CD4-positive, alpha-beta T cell (primary cell): ENCODE measurements at regions of chr15 and their contacts with region 1.

Region 1: GRCh38 chr15:60573936-60574335 is 95.0 kb upstream of the ICE2 start:
- DNase-seq: peak in 8 of 14 experiments; percentile 25 to 88 (median 60)
- ATAC-seq: peak; percentile 83
- H3K4me3 ChIP-seq: peak overlapping the region; percentile 24
- H3K4me3 Mint-ChIP-seq: peak overlapping the region; percentile 80
- H3K27ac ChIP-seq: peak overlapping the region; percentile 58 to 59
- H3K27ac Mint-ChIP-seq: peak overlapping the region; percentile 84
- H3K4me1 ChIP-seq: peaks cover 83% of the 10 kb centered on the region
- H3K4me1 Mint-ChIP-seq: peaks cover 92% of the 10 kb centered on the region
- H3K27me3 ChIP-seq: no peaks in the 10 kb centered on the region
- H3K27me3 Mint-ChIP-seq: no peaks in the 10 kb centered on the region
- CTCF ChIP-seq: no peak

Region 2: GRCh38 chr15:60526127-60526625 is 47.8 kb before region 1 on chr15:
- CTCF ChIA-PET with region 1: interaction called, 10 read pairs
- POLR2A ChIA-PET with region 1: interaction called, 3 read pairs
- intact Hi-C with region 1: loop called in 1 of 2 experiments (anchors 5 kb)
- DNase-seq: peak in 5 of 14 experiments; percentile 16 to 74 (median 41)
- ATAC-seq: peak; percentile 46
- H3K4me3 ChIP-seq: no peak overlapping the region
- H3K4me3 Mint-ChIP-seq: peak overlapping the region; percentile 39
- H3K27ac ChIP-seq: no peak overlapping the region
- H3K27ac Mint-ChIP-seq: peak overlapping the region; percentile 87
- H3K4me1 ChIP-seq: peaks cover 36% of the 10 kb centered on the region
- H3K4me1 Mint-ChIP-seq: peaks cover 84% of the 10 kb centered on the region
- H3K27me3 ChIP-seq: no peaks in the 10 kb centered on the region
- H3K27me3 Mint-ChIP-seq: no peaks in the 10 kb centered on the region
- CTCF ChIP-seq: no peak

Region 3: GRCh38 chr15:60541481-60542299 is 32.2 kb before region 1 on chr15:
- CTCF ChIA-PET with region 1: interaction called, 5 read pairs
- POLR2A ChIA-PET with region 1: interaction called, 5 read pairs
- intact Hi-C with region 1: loop called in 1 of 2 experiments (anchors 5 kb)
- DNase-seq: no peak
- ATAC-seq: no peak
- H3K4me3 ChIP-seq: no peak overlapping the region
- H3K4me3 Mint-ChIP-seq: peak overlapping the region; percentile 57
- H3K27ac ChIP-seq: peak overlapping the region in 1 of 2 donors; percentile 50
- H3K27ac Mint-ChIP-seq: peak overlapping the region; percentile 85
- H3K4me1 ChIP-seq: peaks cover 62% of the 10 kb centered on the region
- H3K4me1 Mint-ChIP-seq: peaks cover 100% of the 10 kb centered on the region
- H3K27me3 ChIP-seq: no peaks in the 10 kb centered on the region
- H3K27me3 Mint-ChIP-seq: no peaks in the 10 kb centered on the region
- CTCF ChIP-seq: no peak

Region 4: DNA sequence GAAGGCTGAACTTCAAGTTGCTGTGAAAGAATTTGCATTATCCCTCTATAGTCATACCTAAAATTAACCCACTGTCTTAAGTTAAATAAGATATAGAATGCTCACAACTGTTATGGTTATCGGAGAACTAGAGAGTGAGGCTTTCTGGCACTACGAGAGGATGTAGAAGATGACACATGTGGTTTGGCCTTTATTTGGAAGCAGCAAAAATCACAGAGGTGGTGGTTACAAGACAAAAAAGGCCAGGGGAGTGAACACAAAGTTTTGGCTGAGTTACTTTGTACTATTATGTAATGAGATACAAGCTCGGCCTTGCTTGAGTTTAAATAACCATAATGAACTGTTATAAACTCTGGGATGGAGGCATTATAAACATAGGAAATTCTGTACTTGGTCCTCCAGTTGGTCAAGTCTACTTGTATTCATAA is 16.7 kb before region 1 on chr15:
- CTCF ChIA-PET with region 1: interaction called, 6 read pairs
- POLR2A ChIA-PET with region 1: interaction called, 16 read pairs
- intact Hi-C with region 1: loop called in 1 of 2 experiments (anchors 2 kb)
- DNase-seq: peak in 4 of 14 experiments; percentile 54 to 75 (median 66)
- ATAC-seq: peak; percentile 81
- H3K4me3 ChIP-seq: no peak overlapping the region
- H3K4me3 Mint-ChIP-seq: peak overlapping the region; percentile 28
- H3K27ac ChIP-seq: peak overlapping the region; percentile 40 to 49
- H3K27ac Mint-ChIP-seq: peak overlapping the region; percentile 85
- H3K4me1 ChIP-seq: peaks cover 44% of the 10 kb centered on the region
- H3K4me1 Mint-ChIP-seq: peaks cover 85% of the 10 kb centered on the region
- H3K27me3 ChIP-seq: no peaks in the 10 kb centered on the region
- H3K27me3 Mint-ChIP-seq: no peaks in the 10 kb centered on the region
- CTCF ChIP-seq: no peak